ENCODE measurements at regions of chr2 and their contacts with region 1.

Region 1: GRCh38 chr2:168961450-168962229 is 60.5 kb downstream of the G6PC2 start:
- DNase-seq: peak; percentile 3 to 26
- H3K4me3 ChIP-seq: no peak overlapping the region
- H3K27ac ChIP-seq: no peak overlapping the region
- H3K4me1 ChIP-seq: no peaks in the 10 kb centered on the region
- H3K27me3 ChIP-seq: no peaks in the 10 kb centered on the region
- CTCF ChIP-seq: peak; percentile 28 to 85 (median 83)
- POLR2A ChIP-seq: no peak

Region 2: GRCh38 chr2:169141713-169142352 is 180.2 kb after region 1 on chr2:
- intact Hi-C with region 1: loop called (anchors 5 kb)
- DNase-seq: peak; percentile 54 to 59
- H3K4me3 ChIP-seq: no peak overlapping the region
- H3K27ac ChIP-seq: no peak overlapping the region
- H3K4me1 ChIP-seq: no peaks in the 10 kb centered on the region
- H3K27me3 ChIP-seq: no peaks in the 10 kb centered on the region
- CTCF ChIP-seq: peak; percentile 60 to 78 (median 66)
- POLR2A ChIP-seq: no peak

Measured in thyroid gland (tissue), 4 donors.